IMR-90 (cell line): ENCODE measurements at regions of chr10 and their contacts with region 1.

Region 1: DNA sequence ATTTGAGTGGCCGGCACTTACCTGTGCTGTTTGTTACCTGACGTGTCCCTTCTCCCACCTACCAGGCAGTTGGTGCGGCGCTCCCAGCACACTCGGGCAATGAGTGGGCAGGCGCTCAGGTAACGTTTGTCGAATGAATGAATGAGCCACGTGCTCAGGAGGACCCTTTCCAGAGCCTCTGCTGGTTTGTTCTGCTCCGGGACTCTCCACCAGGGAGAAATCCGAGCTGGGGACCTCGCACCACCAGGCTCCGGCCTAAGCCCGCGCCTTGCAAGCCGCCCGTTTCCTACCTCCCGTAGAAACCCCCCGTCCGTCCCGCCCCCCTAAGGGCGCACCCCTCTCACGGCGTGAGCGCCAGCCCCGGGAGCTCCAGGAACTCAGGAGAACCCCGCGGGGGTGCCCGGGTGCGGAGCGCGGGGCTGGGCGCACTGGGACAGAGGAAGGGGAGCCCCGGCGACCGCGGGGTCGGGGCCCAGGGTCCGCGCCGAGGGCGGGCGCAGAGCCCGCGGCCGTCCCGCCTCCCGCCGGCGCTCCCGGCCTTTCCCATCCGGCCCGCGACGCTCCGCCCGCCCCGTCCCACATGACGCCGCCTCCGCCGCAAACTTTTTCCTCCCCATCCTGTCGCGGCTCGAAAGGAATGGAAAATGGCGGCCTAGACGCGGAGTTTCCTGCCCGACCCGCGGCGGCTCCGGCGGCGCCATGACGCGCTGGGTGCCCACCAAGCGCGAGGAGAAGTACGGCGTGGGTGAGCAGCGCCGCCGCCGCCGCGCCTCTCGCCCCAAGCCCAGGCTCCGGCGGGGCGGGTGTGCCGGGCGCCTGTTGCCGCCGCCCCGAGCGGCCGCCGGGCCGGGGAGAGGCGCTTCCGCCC is at the start of gene DOCK1:
- DNase-seq: peak; percentile 68
- ATAC-seq: peak; percentile 79
- H3K4me3 ChIP-seq: peak within 1 kb of the TSS; percentile 62
- H3K27ac ChIP-seq: peak within 1 kb of the TSS; percentile 86
- H3K4me1 ChIP-seq: peaks cover 23% of the 10 kb centered on the region
- H3K27me3 ChIP-seq: no peaks in the 10 kb centered on the region
- CTCF ChIP-seq: no peak
- POLR2A ChIP-seq: no peak
- RAD21 ChIP-seq: no peak
- total RNA-seq, gene DOCK1: 71.0 and 79.2 TPM in 2 replicates

Region 2: DNA sequence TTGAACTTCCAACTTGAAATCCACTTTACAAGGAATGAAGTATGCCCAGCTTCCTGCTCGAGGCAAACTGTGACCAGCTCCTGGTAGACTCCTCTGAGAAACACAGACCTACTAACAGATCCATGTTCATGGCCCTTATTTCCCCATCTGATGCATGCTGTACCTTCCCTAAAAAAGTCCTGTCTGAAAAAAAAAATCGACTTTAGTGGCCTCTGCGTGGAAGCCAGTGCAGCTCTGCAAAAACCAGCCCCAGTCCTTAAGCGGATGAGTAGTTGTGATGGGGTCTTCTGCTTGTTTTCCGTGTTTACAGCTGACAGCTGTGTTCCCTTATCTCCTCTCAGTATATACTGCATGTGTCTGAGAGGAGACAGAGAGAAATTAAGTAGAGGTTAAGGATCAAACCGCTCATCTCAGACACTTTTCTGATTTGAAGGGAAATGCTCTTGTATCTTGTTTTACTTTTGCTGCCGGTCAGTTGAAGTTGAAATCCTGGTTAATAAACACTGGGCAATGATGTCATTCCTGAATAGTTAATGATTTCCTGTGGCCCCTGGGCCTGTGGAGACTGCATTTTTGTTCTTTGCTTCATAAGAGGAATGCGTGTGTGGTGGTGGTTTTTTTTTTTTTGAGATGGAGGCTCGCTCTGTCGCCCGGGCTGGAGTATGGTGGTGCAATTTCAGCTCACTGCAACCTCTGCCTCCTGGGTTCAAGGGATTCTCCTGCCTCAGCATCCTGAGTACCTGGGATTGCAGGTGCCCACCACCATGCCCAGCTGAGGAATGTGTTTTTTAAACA is 67.8 kb after region 1 on chr10:
- CTCF ChIA-PET with region 1: interaction called, 3 read pairs
- POLR2A ChIA-PET with region 1: no interaction called
- dilution Hi-C with region 1: no loop called
- in situ Hi-C with region 1: no loop called
- intact Hi-C with region 1: loop called (anchors 2 kb)
- DNase-seq: peak; percentile 97
- ATAC-seq: peak; percentile 90
- H3K4me3 ChIP-seq: peak overlapping the region; percentile 2; the same call in 1 of the 2 replicates
- H3K27ac ChIP-seq: peak overlapping the region; percentile 89
- H3K4me1 ChIP-seq: peaks cover 10% of the 10 kb centered on the region; the same call in 1 of the 2 replicates
- H3K27me3 ChIP-seq: no peaks in the 10 kb centered on the region
- CTCF ChIP-seq: no peak
- POLR2A ChIP-seq: no peak
- RAD21 ChIP-seq: peak; percentile 7; the same call in 1 of the 2 replicates

Region 3: GRCh38 chr10:126997801-126998590 is 92.9 kb after region 1 on chr10:
- CTCF ChIA-PET with region 1: no interaction called
- POLR2A ChIA-PET with region 1: no interaction called
- dilution Hi-C with region 1: no loop called
- in situ Hi-C with region 1: no loop called
- intact Hi-C with region 1: no loop called
- DNase-seq: no peak
- ATAC-seq: no peak
- H3K4me3 ChIP-seq: no peak overlapping the region
- H3K27ac ChIP-seq: no peak overlapping the region
- H3K4me1 ChIP-seq: peaks cover 5% of the 10 kb centered on the region; the same call in 1 of the 2 replicates
- H3K27me3 ChIP-seq: no peaks in the 10 kb centered on the region
- CTCF ChIP-seq: no peak
- POLR2A ChIP-seq: no peak
- RAD21 ChIP-seq: no peak

Region 4: GRCh38 chr10:127148066-127148932 is 243.2 kb after region 1 on chr10:
- CTCF ChIA-PET with region 1: no interaction called
- POLR2A ChIA-PET with region 1: no interaction called
- dilution Hi-C with region 1: no loop called
- in situ Hi-C with region 1: no loop called
- intact Hi-C with region 1: loop called (anchors 5 kb)
- DNase-seq: peak; percentile 91
- ATAC-seq: peak; percentile 21
- H3K4me3 ChIP-seq: peak overlapping the region; percentile 14; the same call in 1 of the 2 replicates
- H3K27ac ChIP-seq: peak overlapping the region; percentile 89
- H3K4me1 ChIP-seq: peaks cover 33% of the 10 kb centered on the region
- H3K27me3 ChIP-seq: no peaks in the 10 kb centered on the region
- CTCF ChIP-seq: no peak
- POLR2A ChIP-seq: no peak
- RAD21 ChIP-seq: no peak

Region 5: GRCh38 chr10:127405221-127405620 is 500.2 kb after region 1 on chr10:
- CTCF ChIA-PET with region 1: no interaction called
- POLR2A ChIA-PET with region 1: no interaction called
- dilution Hi-C with region 1: no loop called
- in situ Hi-C with region 1: no loop called
- intact Hi-C with region 1: loop called (anchors 10 kb)
- DNase-seq: peak; percentile 79
- ATAC-seq: peak; percentile 65
- H3K4me3 ChIP-seq: no peak overlapping the region
- H3K27ac ChIP-seq: peak overlapping the region; percentile 85; the same call in 1 of the 2 replicates
- H3K4me1 ChIP-seq: peaks cover 17% of the 10 kb centered on the region
- H3K27me3 ChIP-seq: no peaks in the 10 kb centered on the region
- CTCF ChIP-seq: no peak
- POLR2A ChIP-seq: no peak
- RAD21 ChIP-seq: no peak